CD8-positive, alpha-beta memory T cell (primary cell): ENCODE measurements at regions of chr1 and their contacts with region 1.

Region 1: DNA sequence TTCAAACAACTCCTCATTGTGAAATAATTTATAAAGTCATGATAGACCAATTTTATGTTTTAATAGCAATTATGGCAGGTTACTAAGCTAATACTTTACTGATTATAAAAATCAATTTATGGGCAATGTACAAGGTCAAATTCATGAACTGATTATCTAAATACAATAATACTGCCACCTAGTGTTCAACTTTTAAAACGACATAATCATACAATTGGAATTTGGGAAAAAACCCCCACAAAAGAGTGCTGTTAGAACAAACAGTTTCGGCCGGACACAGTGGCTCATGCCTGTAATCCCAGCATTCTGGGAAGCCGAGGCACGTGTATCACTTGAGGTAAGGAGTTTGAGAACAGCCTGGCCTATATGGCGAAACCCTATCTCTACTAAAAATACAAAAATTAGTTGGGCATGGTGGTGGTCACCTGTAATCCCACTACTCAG is 14.0 kb downstream of the GTF2B start:
- DNase-seq: peak in 2 of 5 donors; percentile 16 to 30
- H3K4me3 ChIP-seq: no peak overlapping the region
- H3K4me3 Mint-ChIP-seq: peak overlapping the region in 1 of 7 donors; percentile 38
- H3K27ac ChIP-seq: no peak overlapping the region
- H3K27ac Mint-ChIP-seq: peak overlapping the region in 5 of 8 donors; percentile 46 to 82 (median 68)
- H3K4me1 ChIP-seq: peaks cover 23% of the 10 kb centered on the region
- H3K4me1 Mint-ChIP-seq: peaks cover 45 to 80% (median 68%) of the 10 kb centered on the region in 3 donors
- H3K27me3 ChIP-seq: no peaks in the 10 kb centered on the region
- H3K27me3 Mint-ChIP-seq: no peaks in the 10 kb centered on the region

Region 2: DNA sequence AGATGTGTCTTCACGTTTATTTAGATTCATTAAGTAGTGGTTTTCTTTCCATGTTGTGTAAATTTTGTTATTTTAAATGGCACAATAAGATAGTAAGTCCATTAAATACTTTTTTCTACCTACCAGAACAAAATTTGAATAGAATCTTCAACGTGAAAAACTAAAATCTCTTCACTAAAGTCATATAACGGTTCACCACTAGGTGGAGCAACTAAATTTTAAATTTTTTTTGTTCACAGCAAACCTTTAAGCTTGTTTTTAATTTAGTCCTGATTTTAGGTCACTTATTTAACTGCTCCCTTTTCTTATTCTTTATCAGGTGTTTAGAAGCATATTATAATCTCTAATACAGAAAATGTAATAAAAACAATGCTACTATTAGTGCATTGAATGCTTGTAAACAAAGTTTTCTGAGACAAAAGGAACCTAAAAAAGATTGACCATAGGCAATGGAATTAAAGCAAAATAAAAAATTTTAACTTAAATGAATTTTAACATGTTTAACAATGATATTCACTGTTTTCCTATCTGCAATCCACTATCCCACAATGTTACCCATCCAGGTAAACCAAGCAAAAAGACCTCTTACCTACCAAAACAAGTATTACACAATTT is 221.6 kb before region 1 on chr1:
- CTCF ChIA-PET with region 1: interaction called, 13 read pairs
- POLR2A ChIA-PET with region 1: no interaction called
- DNase-seq: peak in 2 of 5 donors; percentile 6 to 31
- H3K4me3 ChIP-seq: no peak overlapping the region
- H3K4me3 Mint-ChIP-seq: no peak overlapping the region
- H3K27ac ChIP-seq: no peak overlapping the region
- H3K27ac Mint-ChIP-seq: no peak overlapping the region
- H3K4me1 ChIP-seq: no peaks in the 10 kb centered on the region
- H3K4me1 Mint-ChIP-seq: peaks cover under 1 to 6% (median 5%) of the 10 kb centered on the region in 3 donors
- H3K27me3 ChIP-seq: no peaks in the 10 kb centered on the region
- H3K27me3 Mint-ChIP-seq: peaks cover 3 to 14% of the 10 kb centered on the region in 2 donors

Region 3: DNA sequence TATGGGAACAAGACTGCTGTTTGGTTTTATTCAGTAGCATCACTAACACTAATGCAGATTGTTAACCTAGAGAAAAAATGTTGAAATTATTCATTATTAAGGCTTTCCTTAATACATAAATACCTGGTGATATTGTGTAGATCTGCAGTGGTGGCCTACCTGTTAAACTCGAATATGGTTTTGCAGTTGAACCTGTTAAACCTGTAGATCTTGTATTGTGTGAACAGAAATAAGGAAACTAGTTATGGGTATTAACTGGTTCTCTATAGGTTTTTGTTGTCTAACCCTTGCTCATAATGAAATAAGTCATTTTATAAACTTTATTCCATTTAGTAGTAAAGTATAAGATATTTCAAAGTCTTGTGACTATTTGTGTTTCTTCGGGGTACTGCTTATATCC is 169.4 kb before region 1 on chr1:
- CTCF ChIA-PET with region 1: no interaction called
- POLR2A ChIA-PET with region 1: no interaction called
- DNase-seq: no peak
- H3K4me3 ChIP-seq: no peak overlapping the region
- H3K4me3 Mint-ChIP-seq: no peak overlapping the region
- H3K27ac ChIP-seq: no peak overlapping the region
- H3K27ac Mint-ChIP-seq: no peak overlapping the region
- H3K4me1 ChIP-seq: no peaks in the 10 kb centered on the region
- H3K4me1 Mint-ChIP-seq: peaks cover 35 to 51% (median 36%) of the 10 kb centered on the region in 3 donors
- H3K27me3 ChIP-seq: no peaks in the 10 kb centered on the region
- H3K27me3 Mint-ChIP-seq: no peaks in the 10 kb centered on the region

Region 4: GRCh38 chr1:88891318-88891950 is 14.0 kb after region 1 on chr1 and contains the start of gene GTF2B:
- CTCF ChIA-PET with region 1: interaction called, 20 read pairs
- POLR2A ChIA-PET with region 1: interaction called, 9 read pairs
- DNase-seq: peak; percentile 88 to 97 (median 94)
- H3K4me3 ChIP-seq: peak within 1 kb of the TSS; percentile 81
- H3K4me3 Mint-ChIP-seq: peak within 1 kb of the TSS; percentile 94 to 99 (median 98)
- H3K27ac ChIP-seq: peak within 1 kb of the TSS; percentile 93
- H3K27ac Mint-ChIP-seq: peak within 1 kb of the TSS; percentile 89 to 99 (median 98)
- H3K4me1 ChIP-seq: peaks cover 36% of the 10 kb centered on the region
- H3K4me1 Mint-ChIP-seq: peaks cover 45 to 55% (median 50%) of the 10 kb centered on the region in 3 donors
- H3K27me3 ChIP-seq: no peaks in the 10 kb centered on the region
- H3K27me3 Mint-ChIP-seq: peaks cover 0 to 4% of the 10 kb centered on the region in 2 donors
- total RNA-seq, gene GTF2B: 39.9 to 40.7 TPM